ENCODE measurements at regions of chr12 and their contacts with region 1.

Region 1: DNA sequence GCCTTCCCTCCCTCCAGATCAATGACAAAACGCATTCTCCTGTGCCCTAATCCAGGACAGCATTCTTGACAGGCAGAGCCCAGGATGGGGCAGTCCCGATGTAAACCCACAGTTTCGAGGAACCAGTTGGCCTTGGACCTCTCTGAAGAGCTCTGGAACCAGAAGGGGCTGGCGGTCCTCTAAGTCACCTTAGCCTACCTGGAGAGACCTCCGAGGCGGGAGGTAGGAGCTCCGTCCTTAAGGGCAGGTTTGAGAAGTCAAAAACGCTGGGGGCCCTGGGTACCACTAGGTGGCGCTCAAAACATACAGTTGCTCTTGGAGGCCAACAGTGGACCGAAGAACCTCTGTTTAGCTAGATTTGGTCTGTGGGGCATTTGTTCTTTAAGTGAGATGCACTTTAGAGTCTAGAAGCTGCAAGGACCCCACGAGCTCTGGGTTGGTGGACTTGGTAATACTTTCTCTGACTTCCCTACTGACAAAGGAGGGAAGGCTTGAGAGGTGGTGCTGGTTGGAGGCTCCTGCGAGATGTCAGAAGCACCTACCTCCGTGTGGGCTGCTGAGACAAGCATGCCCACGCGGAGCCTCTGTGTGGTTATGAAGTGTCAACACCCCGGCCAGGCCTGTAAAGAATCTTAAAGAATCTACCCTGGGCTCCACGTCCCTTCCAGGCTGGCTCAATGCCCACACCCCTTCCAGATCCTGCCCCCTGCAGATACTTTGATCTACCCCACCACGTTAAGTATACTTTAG is 74.8 kb upstream of the CHST11 start:
- DNase-seq: peak; percentile 67 to 94 (median 84)
- H3K4me3 ChIP-seq: no peak overlapping the region
- H3K27ac ChIP-seq: no peak overlapping the region
- H3K4me1 ChIP-seq: peaks cover 0 to 8% of the 10 kb centered on the region in 2 donors
- H3K27me3 ChIP-seq: no peaks in the 10 kb centered on the region
- CTCF ChIP-seq: peak; percentile 87 to 97 (median 92)
- POLR2A ChIP-seq: no peak

Region 2: GRCh38 chr12:104456417-104456949 is 74.6 kb after region 1 on chr12 and contains the start of gene CHST11:
- intact Hi-C with region 1: loop called in 1 of 2 experiments (anchors 5 kb)
- DNase-seq: peak; percentile 85 to 93 (median 90)
- H3K4me3 ChIP-seq: peak within 1 kb of the TSS; percentile 30 to 89 (median 76)
- H3K27ac ChIP-seq: peak within 1 kb of the TSS in 4 of 5 donors; percentile 25 to 92 (median 85)
- H3K4me1 ChIP-seq: peaks cover 4 to 30% of the 10 kb centered on the region in 2 donors
- H3K27me3 ChIP-seq: no peaks in the 10 kb centered on the region
- CTCF ChIP-seq: peak in 5 of 6 experiments; percentile 21 to 57 (median 47)
- POLR2A ChIP-seq: no peak
- total RNA-seq, gene CHST11: 8.5 to 95.1 (median 35.8) TPM

Region 3: GRCh38 chr12:104671407-104672098 is 289.6 kb after region 1 on chr12:
- intact Hi-C with region 1: no loop called
- DNase-seq: peak; percentile 93 to 98 (median 97)
- H3K4me3 ChIP-seq: no peak overlapping the region
- H3K27ac ChIP-seq: peak overlapping the region; percentile 22 to 88 (median 64)
- H3K4me1 ChIP-seq: peaks cover 21 to 75% of the 10 kb centered on the region in 2 donors
- H3K27me3 ChIP-seq: no peaks in the 10 kb centered on the region
- CTCF ChIP-seq: no peak
- POLR2A ChIP-seq: peak in 1 of 2 donors; percentile 30

Region 4: GRCh38 chr12:104870797-104871196 is 488.9 kb after region 1 on chr12:
- intact Hi-C with region 1: loop called (anchors 5 to 10 kb)
- DNase-seq: no peak
- H3K4me3 ChIP-seq: no peak overlapping the region
- H3K27ac ChIP-seq: no peak overlapping the region
- H3K4me1 ChIP-seq: peaks cover under 1 to 3% of the 10 kb centered on the region in 2 donors
- H3K27me3 ChIP-seq: no peaks in the 10 kb centered on the region
- CTCF ChIP-seq: no peak
- POLR2A ChIP-seq: no peak